Right ventricle myocardium superior (tissue), 1 donor: ENCODE measurements at regions of chr14 and their contacts with region 1.

Region 1: GRCh38 chr14:75783184-75783583 is 122.1 kb downstream of the TTLL5 start:
- DNase-seq: peak; percentile 53
- ATAC-seq: peak; percentile 95

Region 2: GRCh38 chr14:75720842-75721498 is 62.2 kb before region 1 on chr14:
- intact Hi-C with region 1: loop called (anchors 10 kb)
- DNase-seq: peak; percentile 76
- ATAC-seq: peak; percentile 79

Region 3: DNA sequence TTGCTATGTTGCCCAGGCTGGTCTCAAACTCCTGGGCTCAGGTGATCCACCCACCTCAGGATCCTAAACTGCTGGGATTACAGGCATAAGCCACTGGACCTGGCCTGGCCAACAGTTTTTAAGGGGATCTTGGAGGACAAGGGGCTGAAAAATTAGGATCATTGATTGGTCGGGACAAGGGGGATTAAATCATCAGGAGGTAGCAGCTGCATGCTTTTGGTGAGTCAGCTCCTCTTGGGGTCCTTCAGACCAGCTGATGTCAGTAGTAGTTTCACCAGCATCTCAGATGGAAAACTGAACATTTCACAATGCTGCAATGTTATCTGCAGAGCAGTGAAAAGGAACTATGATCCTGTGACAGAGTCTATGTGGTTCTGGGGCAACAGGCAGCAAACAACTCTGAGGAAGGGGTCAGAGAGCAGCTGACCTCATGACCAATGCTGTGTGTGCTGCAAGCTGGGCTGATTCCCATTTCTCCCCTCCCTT is 1049.4 kb after region 1 on chr14:
- intact Hi-C with region 1: no loop called
- DNase-seq: no peak
- ATAC-seq: peak; percentile 47